Natural killer cell (primary cell): ENCODE measurements at regions of chr2 and their contacts with region 1.

Region 1: GRCh38 chr2:53994818-53995808 is 24.3 kb upstream of the PSME4 start:
- DNase-seq: peak in 1 of 2 donors; percentile 83
- ATAC-seq: peak; percentile 88 to 98 (median 93)
- H3K4me3 ChIP-seq: peak overlapping the region; percentile 32
- H3K4me3 Mint-ChIP-seq: peak overlapping the region; percentile 86
- H3K27ac ChIP-seq: peak overlapping the region; percentile 85
- H3K27ac Mint-ChIP-seq: peak overlapping the region in 1 of 2 donors; percentile 96
- H3K4me1 ChIP-seq: peaks cover 40% of the 10 kb centered on the region
- H3K4me1 Mint-ChIP-seq: peaks cover 29 to 32% of the 10 kb centered on the region in 2 donors
- H3K27me3 ChIP-seq: no peaks in the 10 kb centered on the region
- H3K27me3 Mint-ChIP-seq: no peaks in the 10 kb centered on the region
- CTCF ChIP-seq: no peak

Region 2: DNA sequence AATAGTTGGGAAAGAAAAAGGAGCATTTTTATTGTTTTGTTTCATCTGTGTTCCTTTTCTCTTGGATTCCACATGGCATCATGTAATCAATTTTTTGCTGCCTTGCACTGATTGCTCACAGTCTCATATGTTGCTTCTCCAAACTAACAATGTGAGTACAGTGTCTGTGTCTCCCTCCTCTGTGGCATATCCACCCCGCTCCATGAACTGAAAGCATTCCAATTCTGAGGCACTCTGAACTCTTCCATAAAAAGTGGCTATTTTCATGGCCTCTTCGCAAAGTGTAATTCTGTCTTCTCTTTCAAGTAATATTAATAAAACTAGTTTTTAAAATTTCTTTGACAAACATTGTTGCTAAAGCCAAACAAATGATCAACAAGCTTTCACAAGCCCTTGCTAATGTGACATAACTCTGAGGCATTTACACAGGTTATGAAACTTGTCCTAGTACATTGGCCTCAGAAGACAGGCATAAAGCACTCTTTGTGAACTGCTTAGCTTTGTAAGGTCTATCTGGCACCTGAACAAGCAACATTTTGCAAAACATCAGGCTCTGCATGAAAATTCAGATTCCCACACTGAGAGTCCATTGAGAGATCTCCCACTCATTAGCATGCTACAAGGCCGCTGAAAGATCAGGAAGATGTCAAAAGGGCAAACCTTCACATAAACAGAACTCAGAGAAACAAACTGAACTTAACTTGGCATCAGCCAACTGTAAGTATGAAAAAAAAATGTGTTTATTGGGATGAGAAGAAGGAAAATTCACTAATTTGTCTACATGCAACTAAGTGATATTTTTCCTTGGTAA is 168.3 kb before region 1 on chr2:
- intact Hi-C with region 1: no loop called
- DNase-seq: no peak
- ATAC-seq: no peak
- H3K4me3 ChIP-seq: no peak overlapping the region
- H3K4me3 Mint-ChIP-seq: no peak overlapping the region
- H3K27ac ChIP-seq: no peak overlapping the region
- H3K27ac Mint-ChIP-seq: no peak overlapping the region
- H3K4me1 ChIP-seq: no peaks in the 10 kb centered on the region
- H3K4me1 Mint-ChIP-seq: no peaks in the 10 kb centered on the region
- H3K27me3 ChIP-seq: no peaks in the 10 kb centered on the region
- H3K27me3 Mint-ChIP-seq: no peaks in the 10 kb centered on the region
- CTCF ChIP-seq: no peak

Region 3: DNA sequence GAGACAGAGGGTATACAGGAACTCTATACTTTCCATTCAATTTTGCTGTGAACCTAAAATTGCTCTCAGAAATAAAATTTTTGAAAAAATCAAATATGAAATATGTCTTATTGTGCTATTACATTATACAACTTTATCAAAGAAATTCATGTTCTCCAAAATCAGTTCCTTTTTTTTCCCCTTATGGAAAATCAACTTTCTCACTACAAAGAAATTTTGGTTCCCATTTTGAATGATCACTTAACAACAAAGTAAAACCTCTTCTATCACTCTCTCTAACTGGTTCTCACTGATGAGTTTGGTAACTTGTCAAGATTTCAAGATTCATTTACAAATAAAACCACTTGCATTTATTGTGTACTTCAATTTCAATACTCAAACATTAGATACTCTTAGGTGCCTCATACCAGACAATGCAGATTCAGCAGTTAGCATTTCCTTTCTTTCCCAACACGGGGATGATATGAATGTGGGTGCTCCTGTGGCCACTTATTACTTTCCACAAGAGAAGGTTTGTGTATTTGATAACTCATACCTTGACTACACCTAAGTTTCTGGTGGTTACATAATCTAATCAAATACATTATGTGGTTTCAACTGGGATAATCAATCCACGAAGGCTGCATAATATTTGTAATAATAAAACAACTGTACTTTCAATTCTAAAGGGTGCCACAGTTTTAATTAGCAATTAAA is 30.7 kb before region 1 on chr2:
- intact Hi-C with region 1: loop called (anchors 5 kb)
- DNase-seq: peak in 1 of 2 donors; percentile 10
- ATAC-seq: no peak
- H3K4me3 ChIP-seq: no peak overlapping the region
- H3K4me3 Mint-ChIP-seq: peak overlapping the region; percentile 55
- H3K27ac ChIP-seq: no peak overlapping the region
- H3K27ac Mint-ChIP-seq: peak overlapping the region; percentile 34 to 51
- H3K4me1 ChIP-seq: peaks cover 30% of the 10 kb centered on the region
- H3K4me1 Mint-ChIP-seq: peaks cover 79 to 80% of the 10 kb centered on the region in 2 donors
- H3K27me3 ChIP-seq: no peaks in the 10 kb centered on the region
- H3K27me3 Mint-ChIP-seq: no peaks in the 10 kb centered on the region
- CTCF ChIP-seq: no peak

Region 4: GRCh38 chr2:53970724-53971602 is 24.1 kb before region 1 on chr2 and contains the start of gene PSME4:
- intact Hi-C with region 1: loop called (anchors 1 kb)
- DNase-seq: peak; percentile 91 to 94
- ATAC-seq: peak; percentile 89 to 97 (median 92)
- H3K4me3 ChIP-seq: peak within 1 kb of the TSS; percentile 92
- H3K4me3 Mint-ChIP-seq: peak within 1 kb of the TSS; percentile 96
- H3K27ac ChIP-seq: peak within 1 kb of the TSS; percentile 89
- H3K27ac Mint-ChIP-seq: peak within 1 kb of the TSS; percentile 94
- H3K4me1 ChIP-seq: peaks cover 27% of the 10 kb centered on the region
- H3K4me1 Mint-ChIP-seq: peaks cover 50 to 54% of the 10 kb centered on the region in 2 donors
- H3K27me3 ChIP-seq: no peaks in the 10 kb centered on the region
- H3K27me3 Mint-ChIP-seq: no peaks in the 10 kb centered on the region
- CTCF ChIP-seq: no peak
- total RNA-seq, gene PSME4: 140 to 149 (median 141) TPM

Region 5: DNA sequence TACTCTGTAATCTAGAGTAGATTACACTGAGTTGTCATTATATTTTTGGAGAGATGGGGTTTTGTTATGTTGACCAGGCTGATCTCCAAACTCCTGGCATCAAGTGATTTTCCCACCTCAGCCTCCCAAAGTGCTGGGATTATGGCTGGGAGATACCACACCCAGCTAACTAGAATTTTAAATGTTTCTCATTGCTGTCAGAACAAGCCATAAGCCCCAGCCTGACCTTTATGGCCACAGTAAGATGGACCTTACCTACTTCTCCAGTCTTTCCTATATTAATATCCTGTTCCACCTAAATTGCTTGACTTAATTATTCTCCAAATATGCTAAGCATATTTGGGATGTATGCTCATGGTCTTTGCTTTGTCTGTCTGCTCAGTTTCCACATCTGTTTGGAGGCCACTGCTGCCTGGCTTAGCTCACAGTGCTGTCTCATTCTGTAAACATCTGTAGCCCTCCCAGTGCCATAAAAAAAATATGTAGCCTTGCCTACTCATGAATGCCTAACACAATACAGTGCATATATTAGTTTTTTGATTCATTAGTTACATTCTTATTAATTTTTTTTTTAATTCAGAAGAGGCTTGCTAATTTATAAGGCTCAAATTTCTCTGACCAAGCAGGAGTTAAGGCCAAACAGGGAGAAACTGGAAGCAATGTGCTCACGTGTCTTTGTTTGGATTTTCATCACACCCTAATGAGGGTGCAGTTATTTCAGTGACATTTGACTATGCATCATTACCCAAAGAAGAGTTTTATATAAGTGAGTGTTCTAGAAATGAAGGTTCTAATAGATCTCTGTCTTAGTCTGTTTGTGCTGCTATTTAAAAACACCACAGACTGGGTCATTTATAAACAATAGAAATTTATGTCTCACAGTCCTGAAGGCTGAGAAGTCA is 20.9 kb after region 1 on chr2:
- intact Hi-C with region 1: no loop called
- DNase-seq: no peak
- ATAC-seq: no peak
- H3K4me3 ChIP-seq: no peak overlapping the region
- H3K4me3 Mint-ChIP-seq: no peak overlapping the region
- H3K27ac ChIP-seq: no peak overlapping the region
- H3K27ac Mint-ChIP-seq: peak overlapping the region in 1 of 2 donors; percentile 77
- H3K4me1 ChIP-seq: peaks cover 19% of the 10 kb centered on the region
- H3K4me1 Mint-ChIP-seq: peaks cover 24 to 29% of the 10 kb centered on the region in 2 donors
- H3K27me3 ChIP-seq: no peaks in the 10 kb centered on the region
- H3K27me3 Mint-ChIP-seq: no peaks in the 10 kb centered on the region
- CTCF ChIP-seq: no peak

Region 6: DNA sequence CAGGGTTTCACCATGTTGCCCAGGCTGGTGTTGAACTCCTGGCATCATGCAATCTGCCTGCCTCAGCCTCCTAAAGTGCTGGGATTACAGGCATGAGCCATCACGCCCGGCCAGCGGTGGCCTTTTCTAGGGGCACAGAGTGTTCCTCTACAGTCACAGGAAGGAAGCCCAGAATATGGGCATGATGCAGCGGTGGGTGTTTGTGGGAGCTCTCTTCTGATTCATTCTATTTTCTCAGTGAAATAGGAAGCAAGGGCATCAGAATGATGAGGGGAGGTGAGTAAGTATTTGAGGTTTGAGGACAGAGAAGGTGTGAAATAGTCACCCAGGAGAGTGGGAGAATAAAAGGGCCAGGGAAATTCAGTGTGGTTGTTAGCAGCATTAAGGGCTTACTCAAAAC is 46.0 kb after region 1 on chr2:
- intact Hi-C with region 1: loop called (anchors 2 kb)
- DNase-seq: peak; percentile 34
- ATAC-seq: peak; percentile 71 to 91 (median 88)
- H3K4me3 ChIP-seq: no peak overlapping the region
- H3K4me3 Mint-ChIP-seq: no peak overlapping the region
- H3K27ac ChIP-seq: peak overlapping the region; percentile 12
- H3K27ac Mint-ChIP-seq: no peak overlapping the region
- H3K4me1 ChIP-seq: peaks cover 11% of the 10 kb centered on the region
- H3K4me1 Mint-ChIP-seq: peaks cover 0 to 19% of the 10 kb centered on the region in 2 donors
- H3K27me3 ChIP-seq: no peaks in the 10 kb centered on the region
- H3K27me3 Mint-ChIP-seq: no peaks in the 10 kb centered on the region
- CTCF ChIP-seq: no peak

Region 7: GRCh38 chr2:54048117-54048785 is 53.1 kb after region 1 on chr2:
- intact Hi-C with region 1: loop called (anchors 2 kb)
- DNase-seq: peak in 1 of 2 donors; percentile 51
- ATAC-seq: peak; percentile 86 to 91 (median 87)
- H3K4me3 ChIP-seq: no peak overlapping the region
- H3K4me3 Mint-ChIP-seq: no peak overlapping the region
- H3K27ac ChIP-seq: peak overlapping the region; percentile 5
- H3K27ac Mint-ChIP-seq: peak overlapping the region; percentile 59 to 78
- H3K4me1 ChIP-seq: peaks cover 18% of the 10 kb centered on the region
- H3K4me1 Mint-ChIP-seq: peaks cover 29 to 45% of the 10 kb centered on the region in 2 donors
- H3K27me3 ChIP-seq: no peaks in the 10 kb centered on the region
- H3K27me3 Mint-ChIP-seq: no peaks in the 10 kb centered on the region
- CTCF ChIP-seq: no peak